ENCODE measurements at regions of chr2 and their contacts with region 1.

Region 1: DNA sequence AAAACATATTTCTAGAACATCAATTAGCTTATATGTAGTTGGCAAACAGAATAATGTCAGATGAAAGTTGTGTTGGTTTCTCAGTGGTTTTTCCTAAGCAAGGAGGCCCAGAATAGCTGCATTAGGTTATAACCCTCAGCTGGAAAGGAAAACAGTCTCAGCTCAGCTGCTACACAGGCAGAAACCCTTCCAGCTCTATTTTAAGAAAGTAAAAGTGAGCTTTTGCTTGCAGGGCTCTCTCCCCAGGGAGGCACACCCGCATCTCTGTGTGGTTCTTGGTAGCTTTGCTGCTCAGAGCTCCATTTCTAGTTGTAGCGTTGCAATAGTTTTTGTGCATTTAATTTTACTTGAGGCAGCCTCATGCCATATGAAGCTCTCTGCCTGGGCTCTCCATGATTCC is 54.6 kb downstream of the PIKFYVE start:
- DNase-seq: no peak
- H3K4me3 ChIP-seq: no peak overlapping the region
- H3K27ac ChIP-seq: no peak overlapping the region
- H3K4me1 ChIP-seq: no peaks in the 10 kb centered on the region
- H3K27me3 ChIP-seq: no peaks in the 10 kb centered on the region
- CTCF ChIP-seq: no peak

Region 2: DNA sequence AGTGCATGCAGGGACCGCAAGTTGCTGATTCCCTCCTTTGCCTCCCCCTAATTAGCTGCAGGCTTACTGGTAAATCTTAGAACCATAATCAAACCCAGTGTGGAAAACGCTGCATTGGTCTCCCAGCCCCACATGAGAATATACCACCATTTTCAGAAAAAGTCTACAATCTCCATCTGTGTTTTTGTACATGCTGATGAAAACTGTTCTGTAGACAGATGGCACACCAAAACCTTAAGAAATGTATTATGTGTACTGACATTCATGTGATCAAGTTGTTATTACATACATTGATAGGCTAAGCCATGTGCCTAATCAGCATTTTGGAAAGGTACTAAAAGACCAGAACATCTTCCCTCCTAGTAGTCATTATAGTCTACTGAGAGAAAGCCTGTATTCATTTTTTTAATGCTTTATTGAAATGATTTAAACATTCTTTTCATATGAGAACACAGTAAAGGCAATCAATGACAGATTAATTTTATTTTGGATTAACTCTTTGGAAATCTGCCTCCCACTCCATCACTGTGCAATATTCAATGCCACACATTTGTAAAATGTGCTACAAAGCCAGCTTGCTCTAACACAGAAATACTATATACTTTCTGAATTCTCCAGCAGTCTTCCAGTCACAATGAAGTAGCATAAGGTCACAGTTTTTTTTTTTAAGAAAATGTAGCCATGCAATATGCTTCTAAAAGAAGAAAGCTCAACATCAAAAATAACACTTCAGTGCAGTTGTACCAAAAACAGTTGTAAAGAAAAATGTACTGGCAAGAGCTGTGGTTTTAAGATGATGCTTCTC is 155.5 kb before region 1 on chr2:
- CTCF ChIA-PET with region 1: no interaction called
- POLR2A ChIA-PET with region 1: interaction called, 12 read pairs
- intact Hi-C with region 1: no loop called
- DNase-seq: no peak
- H3K4me3 ChIP-seq: no peak overlapping the region
- H3K27ac ChIP-seq: no peak overlapping the region
- H3K4me1 ChIP-seq: no peaks in the 10 kb centered on the region
- H3K27me3 ChIP-seq: no peaks in the 10 kb centered on the region
- CTCF ChIP-seq: no peak